Activated T-helper 1 cell treated with anti-CD3 and anti-CD28 coated beads, Interleukin-12 subunit alpha, Interleukin-12 subunit beta, Interleukin-2, Interleukin-4 antibody, amounts not matched to agents 30 ng/mL and 10 ng/mL and 1 ng/mL, durations not matched to agents 14 hours and 24 hours and 36 hours (primary cell): ENCODE measurements at regions of chr15 and their contacts with region 1.

Region 1: GRCh38 chr15:69413822-69414700 is at the start of gene KIF23:
- DNase-seq: peak; percentile 91
- H3K4me3 Mint-ChIP-seq: peak within 1 kb of the TSS; percentile 89
- H3K27ac Mint-ChIP-seq: peak within 1 kb of the TSS; percentile 73
- H3K4me1 Mint-ChIP-seq: peaks cover 42% of the 10 kb centered on the region
- H3K27me3 Mint-ChIP-seq: peaks cover 2% of the 10 kb centered on the region
- total RNA-seq, gene KIF23: 40.8 and 41.6 TPM in 2 replicates

Region 2: GRCh38 chr15:68962465-68962864 is 451.6 kb before region 1 on chr15:
- intact Hi-C with region 1: no loop called
- DNase-seq: no peak
- H3K4me3 Mint-ChIP-seq: no peak overlapping the region
- H3K27ac Mint-ChIP-seq: no peak overlapping the region
- H3K4me1 Mint-ChIP-seq: no peaks in the 10 kb centered on the region
- H3K27me3 Mint-ChIP-seq: peaks cover 14% of the 10 kb centered on the region

Region 3: DNA sequence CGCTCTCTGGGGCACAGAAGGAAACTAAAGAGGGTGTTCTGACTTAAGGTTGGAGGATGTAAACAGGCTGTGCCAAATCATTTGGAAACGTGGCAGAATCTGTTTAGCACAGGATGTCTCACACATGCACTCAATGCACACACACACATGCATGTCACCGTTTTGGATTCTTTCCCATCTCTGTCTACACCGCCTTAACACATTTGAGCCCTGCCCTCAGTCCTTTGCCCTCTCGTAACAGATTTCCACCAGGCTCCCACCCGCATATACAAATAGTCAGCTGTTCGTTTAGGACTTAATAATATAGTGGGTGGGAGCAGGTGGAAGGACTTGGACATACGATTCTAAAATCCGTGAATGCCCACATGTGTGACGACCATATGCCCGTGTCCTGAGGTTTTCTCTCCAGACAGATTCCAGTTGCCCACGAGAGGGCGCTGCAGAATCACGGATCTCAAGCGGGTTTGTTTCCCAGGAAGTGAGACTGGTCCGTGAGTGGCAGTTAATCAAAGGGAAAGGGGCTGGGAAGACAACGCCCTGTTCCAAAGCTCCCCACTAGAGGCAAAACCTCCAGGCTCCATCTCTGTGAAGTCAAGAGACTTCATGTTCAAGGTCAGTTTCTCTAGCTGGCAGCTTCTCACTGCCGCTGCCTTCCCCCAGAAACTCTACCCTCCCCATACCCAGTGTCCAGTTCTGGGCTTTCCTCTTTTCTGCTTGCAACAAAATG is 355.1 kb before region 1 on chr15:
- intact Hi-C with region 1: loop called (anchors 1 kb)
- DNase-seq: peak; percentile 46
- H3K4me3 Mint-ChIP-seq: no peak overlapping the region
- H3K27ac Mint-ChIP-seq: no peak overlapping the region
- H3K4me1 Mint-ChIP-seq: peaks cover 21% of the 10 kb centered on the region
- H3K27me3 Mint-ChIP-seq: peaks cover 11% of the 10 kb centered on the region

Region 4: GRCh38 chr15:69320977-69321554 is 93.0 kb before region 1 on chr15:
- intact Hi-C with region 1: loop called (anchors 1 kb)
- DNase-seq: no peak
- H3K4me3 Mint-ChIP-seq: no peak overlapping the region
- H3K27ac Mint-ChIP-seq: peak overlapping the region; percentile 45
- H3K4me1 Mint-ChIP-seq: peaks cover 12% of the 10 kb centered on the region
- H3K27me3 Mint-ChIP-seq: peaks cover 24% of the 10 kb centered on the region

Region 5: DNA sequence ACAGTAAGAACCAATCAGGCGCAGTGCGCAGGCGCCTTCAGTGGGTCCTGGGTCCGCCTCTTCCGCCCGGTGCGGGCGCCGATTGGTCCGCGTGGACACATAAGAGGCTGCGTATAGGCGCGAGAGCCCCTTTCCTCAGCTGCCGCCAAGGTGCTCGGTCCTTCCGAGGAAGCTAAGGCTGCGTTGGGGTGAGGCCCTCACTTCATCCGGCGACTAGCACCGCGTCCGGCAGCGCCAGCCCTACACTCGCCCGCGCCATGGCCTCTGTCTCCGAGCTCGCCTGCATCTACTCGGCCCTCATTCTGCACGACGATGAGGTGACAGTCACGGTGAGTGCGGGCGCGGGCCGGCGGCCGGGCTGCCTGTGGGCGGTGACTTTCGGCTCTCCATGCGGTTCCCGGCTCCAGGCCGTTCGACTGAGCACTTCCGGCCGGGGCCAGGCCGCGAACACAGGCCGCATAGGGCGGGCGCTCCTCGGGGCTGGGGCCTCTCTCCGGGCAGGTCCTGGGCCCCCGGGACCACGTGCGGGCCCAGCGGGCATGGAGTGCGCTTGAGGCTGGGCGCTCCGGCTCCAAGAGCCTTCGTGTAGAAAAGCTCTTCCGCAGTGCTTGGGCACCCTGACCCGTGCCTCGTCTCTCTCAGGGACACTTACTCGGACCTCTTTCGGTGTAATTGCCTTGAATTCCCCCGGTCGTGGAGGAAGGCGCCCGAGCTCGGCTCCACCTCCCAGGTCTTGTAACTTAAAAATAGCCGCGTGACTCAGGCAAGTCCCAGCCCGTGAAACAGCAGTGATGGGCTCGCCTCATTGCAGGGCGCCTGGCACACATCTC is 38.8 kb after region 1 on chr15 and contains the start of gene RPLP1:
- intact Hi-C with region 1: loop called (anchors 1 kb)
- DNase-seq: peak; percentile 93
- H3K4me3 Mint-ChIP-seq: peak within 1 kb of the TSS; percentile 99
- H3K27ac Mint-ChIP-seq: peak within 1 kb of the TSS; percentile 100
- H3K4me1 Mint-ChIP-seq: peaks cover 35% of the 10 kb centered on the region
- H3K27me3 Mint-ChIP-seq: no peaks in the 10 kb centered on the region
- total RNA-seq, gene RPLP1: 1,633 and 1,710 TPM in 2 replicates

Region 6: DNA sequence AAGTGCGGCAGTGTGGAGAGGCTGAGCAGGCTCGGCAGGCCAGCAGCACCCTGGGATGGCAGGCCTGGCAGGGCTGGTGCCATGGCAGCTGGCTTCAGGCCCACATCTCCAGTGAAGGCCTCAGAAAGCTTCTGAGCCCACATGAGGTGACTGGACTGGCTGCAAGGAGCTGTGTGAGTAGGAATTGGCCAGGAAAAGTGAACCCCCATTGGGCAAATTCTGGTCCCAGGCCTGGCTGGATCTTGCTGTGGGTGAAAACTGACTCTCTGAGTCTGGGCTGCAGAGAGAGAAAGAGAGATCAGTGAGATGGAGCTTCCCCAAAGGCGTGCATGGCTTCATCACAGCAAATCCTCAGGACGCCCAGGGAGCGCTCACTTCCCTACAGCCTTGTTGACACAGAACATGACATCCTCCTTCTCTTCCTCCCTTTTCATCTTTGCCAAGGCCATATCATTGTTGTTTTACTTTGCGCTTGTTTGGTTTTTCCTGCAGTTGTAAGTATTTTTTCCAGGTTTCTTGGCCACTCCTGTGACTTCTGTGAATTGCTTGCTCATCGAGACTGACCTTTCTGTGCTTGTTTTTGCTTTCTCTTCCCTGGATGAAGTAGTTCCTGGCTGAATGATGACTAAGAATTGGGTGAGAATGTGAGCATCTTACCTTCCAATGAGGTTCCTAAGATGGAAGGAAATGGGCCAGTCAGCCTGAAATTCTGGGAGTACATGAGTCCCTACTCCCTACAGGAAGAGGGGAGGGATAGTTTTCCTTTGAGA is 384.6 kb after region 1 on chr15:
- intact Hi-C with region 1: no loop called
- DNase-seq: no peak
- H3K4me3 Mint-ChIP-seq: no peak overlapping the region
- H3K27ac Mint-ChIP-seq: no peak overlapping the region
- H3K4me1 Mint-ChIP-seq: no peaks in the 10 kb centered on the region
- H3K27me3 Mint-ChIP-seq: peaks cover 8% of the 10 kb centered on the region

Region 7: DNA sequence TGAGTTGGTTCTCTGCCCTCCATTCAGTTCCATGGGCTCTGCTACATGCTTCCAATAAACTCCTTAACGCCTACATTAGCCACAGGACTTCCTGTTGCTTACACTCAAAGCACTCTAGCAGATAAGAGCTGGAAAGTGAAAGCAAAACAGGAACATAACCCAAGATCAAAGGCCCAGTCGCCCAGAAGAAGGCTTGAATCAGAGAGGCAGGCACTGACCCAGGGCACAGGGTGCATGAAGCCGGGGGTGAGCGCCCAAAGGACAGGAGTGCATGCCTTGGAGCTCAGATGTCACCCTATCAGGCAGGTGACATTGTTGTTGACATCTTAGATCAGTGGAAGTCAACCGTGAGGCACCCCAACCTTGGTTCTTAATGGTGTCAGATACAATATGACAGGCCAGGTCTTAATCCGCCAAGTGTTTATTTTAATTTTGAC is 1114.2 kb after region 1 on chr15:
- intact Hi-C with region 1: loop called (anchors 1 kb)
- DNase-seq: peak; percentile 60
- H3K4me3 Mint-ChIP-seq: peak overlapping the region; percentile 27
- H3K27ac Mint-ChIP-seq: peak overlapping the region; percentile 50
- H3K4me1 Mint-ChIP-seq: peaks cover 32% of the 10 kb centered on the region
- H3K27me3 Mint-ChIP-seq: peaks cover 11% of the 10 kb centered on the region